Mammary epithelial cell (primary cell): ENCODE measurements at regions of chr5 and their contacts with region 1.

Region 1: DNA sequence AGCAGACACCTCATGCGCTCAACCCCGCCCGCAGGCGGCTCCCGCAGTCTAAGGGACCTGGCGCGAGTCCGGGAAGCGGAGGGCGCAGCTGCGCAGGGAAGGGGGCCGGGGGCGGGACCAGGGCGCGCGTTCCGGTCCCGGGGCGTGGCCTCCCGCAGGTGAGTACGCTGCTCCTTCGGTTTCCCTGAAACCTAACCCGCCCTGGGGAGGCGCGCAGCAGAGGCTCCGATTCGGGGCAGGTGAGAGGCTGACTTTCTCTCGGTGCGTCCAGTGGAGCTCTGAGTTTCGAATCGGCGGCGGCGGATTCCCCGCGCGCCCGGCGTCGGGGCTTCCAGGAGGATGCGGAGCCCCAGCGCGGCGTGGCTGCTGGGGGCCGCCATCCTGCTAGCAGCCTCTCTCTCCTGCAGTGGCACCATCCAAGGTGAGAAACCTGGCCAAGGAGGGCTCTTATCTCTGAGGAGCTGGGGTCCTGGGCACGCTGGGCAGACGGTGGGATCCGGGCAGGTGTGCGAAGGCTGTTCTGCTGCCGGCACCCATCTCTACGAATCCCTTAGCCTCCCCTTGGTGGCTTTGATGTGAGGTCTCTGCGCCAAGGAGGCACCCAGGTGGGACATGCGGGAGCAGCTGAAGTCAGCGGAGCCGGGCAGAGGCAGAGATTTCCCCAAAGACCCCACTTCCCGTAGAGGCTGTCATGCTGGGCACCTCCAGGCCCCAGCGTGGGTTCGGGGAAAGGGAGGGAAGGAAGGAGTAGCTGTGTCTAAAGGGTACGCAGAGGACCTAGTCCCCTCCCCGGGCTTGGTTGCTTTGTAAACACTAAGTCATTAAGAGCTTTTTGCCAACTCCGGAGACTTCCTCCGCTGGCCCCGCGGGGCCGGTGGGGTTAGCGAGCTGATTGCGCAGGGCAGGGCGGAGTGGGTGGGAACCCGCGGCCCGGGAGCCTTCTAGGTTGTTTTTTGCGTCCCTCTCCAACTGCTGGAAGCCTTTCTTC is at the start of gene F2RL1:
- DNase-seq: peak; percentile 98
- H3K4me3 ChIP-seq: peak within 1 kb of the TSS; percentile 81 to 97 (median 94)
- H3K27ac ChIP-seq: peak within 1 kb of the TSS; percentile 97
- H3K4me1 ChIP-seq: peaks cover 39% of the 10 kb centered on the region
- H3K27me3 ChIP-seq: no peaks in the 10 kb centered on the region
- CTCF ChIP-seq: no peak
- total RNA-seq, gene F2RL1: 57.2 to 93.5 TPM

Region 2: GRCh38 chr5:76733049-76733417 is 86.1 kb before region 1 on chr5:
- CTCF ChIA-PET with region 1: no interaction called
- dilution Hi-C with region 1: no loop called
- in situ Hi-C with region 1: no loop called
- intact Hi-C with region 1: no loop called
- DNase-seq: no peak
- H3K4me3 ChIP-seq: no peak overlapping the region
- H3K27ac ChIP-seq: no peak overlapping the region
- H3K4me1 ChIP-seq: no peaks in the 10 kb centered on the region
- H3K27me3 ChIP-seq: no peaks in the 10 kb centered on the region
- CTCF ChIP-seq: no peak

Region 3: GRCh38 chr5:76782444-76782843 is 36.7 kb before region 1 on chr5:
- CTCF ChIA-PET with region 1: no interaction called
- dilution Hi-C with region 1: no loop called
- in situ Hi-C with region 1: loop called in 1 of 2 experiments (anchors 5 kb)
- intact Hi-C with region 1: loop called (anchors 5 kb)
- DNase-seq: no peak
- H3K4me3 ChIP-seq: no peak overlapping the region
- H3K27ac ChIP-seq: no peak overlapping the region
- H3K4me1 ChIP-seq: peaks cover 10% of the 10 kb centered on the region
- H3K27me3 ChIP-seq: no peaks in the 10 kb centered on the region
- CTCF ChIP-seq: no peak